Activated B cell treated with CpG ODN at 0.5 μM for 24 hours (primary cell): ENCODE measurements at regions of chr7 and their contacts with region 1.

Region 1: GRCh38 chr7:29921404-29922010 is 68.1 kb downstream of the SCRN1 start:
- DNase-seq: no peak
- ATAC-seq: peak; percentile 97
- H3K4me3 Mint-ChIP-seq: no peak overlapping the region
- H3K27ac Mint-ChIP-seq: no peak overlapping the region
- H3K4me1 Mint-ChIP-seq: no peaks in the 10 kb centered on the region
- H3K27me3 Mint-ChIP-seq: no peaks in the 10 kb centered on the region
- CTCF ChIP-seq: no peak

Region 2: GRCh38 chr7:29976673-29977415 is 55.3 kb after region 1 on chr7:
- CTCF ChIA-PET with region 1: no interaction called
- POLR2A ChIA-PET with region 1: no interaction called
- intact Hi-C with region 1: no loop called
- DNase-seq: no peak
- ATAC-seq: no peak
- H3K4me3 Mint-ChIP-seq: no peak overlapping the region
- H3K27ac Mint-ChIP-seq: no peak overlapping the region
- H3K4me1 Mint-ChIP-seq: peaks cover 17% of the 10 kb centered on the region
- H3K27me3 Mint-ChIP-seq: no peaks in the 10 kb centered on the region
- CTCF ChIP-seq: no peak

Region 3: DNA sequence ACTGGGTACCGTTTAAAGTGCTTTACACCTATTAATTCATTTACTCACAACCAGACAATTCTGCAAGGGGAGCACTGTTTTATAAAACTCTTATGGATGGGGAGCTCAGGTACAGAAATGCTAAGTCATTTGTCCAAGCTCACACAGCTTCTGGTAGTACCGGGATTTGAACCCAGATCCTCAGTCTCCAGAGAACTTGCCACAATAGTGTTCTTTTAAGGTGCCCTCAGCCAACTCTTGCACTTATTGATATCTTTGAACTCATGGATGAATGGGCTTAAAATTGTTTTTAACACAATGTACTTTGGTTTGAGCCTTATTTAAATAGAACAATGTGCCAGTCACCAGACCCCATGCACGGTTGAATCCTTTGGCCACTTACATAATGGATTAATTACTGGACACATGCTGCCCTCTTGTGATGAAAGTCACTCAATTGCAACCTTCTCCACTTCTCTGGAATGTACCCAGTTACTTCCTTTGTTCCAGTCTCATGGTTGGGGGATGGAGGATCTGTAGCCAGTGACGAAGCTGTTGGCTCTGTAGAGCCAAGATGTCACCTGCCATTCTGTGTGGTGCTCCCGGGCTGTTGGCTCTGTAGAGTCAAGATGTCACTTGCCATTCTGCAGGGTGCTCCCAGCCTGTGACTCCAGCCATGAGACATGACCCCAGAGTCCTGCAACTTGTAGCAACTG is 491.4 kb after region 1 on chr7:
- CTCF ChIA-PET with region 1: no interaction called
- POLR2A ChIA-PET with region 1: no interaction called
- intact Hi-C with region 1: loop called (anchors 2 kb)
- DNase-seq: no peak
- ATAC-seq: peak; percentile 57
- H3K4me3 Mint-ChIP-seq: no peak overlapping the region
- H3K27ac Mint-ChIP-seq: no peak overlapping the region
- H3K4me1 Mint-ChIP-seq: peaks cover 33% of the 10 kb centered on the region
- H3K27me3 Mint-ChIP-seq: no peaks in the 10 kb centered on the region
- CTCF ChIP-seq: no peak

Region 4: GRCh38 chr7:30911561-30911969 is 990.1 kb after region 1 on chr7 and contains the start of gene AQP1:
- CTCF ChIA-PET with region 1: no interaction called
- POLR2A ChIA-PET with region 1: no interaction called
- intact Hi-C with region 1: no loop called
- DNase-seq: no peak
- ATAC-seq: no peak
- H3K4me3 Mint-ChIP-seq: no peak within 1 kb of the TSS
- H3K27ac Mint-ChIP-seq: no peak within 1 kb of the TSS
- H3K4me1 Mint-ChIP-seq: no peaks in the 10 kb centered on the region
- H3K27me3 Mint-ChIP-seq: peaks cover 6% of the 10 kb centered on the region
- CTCF ChIP-seq: no peak
- total RNA-seq, gene AQP1: 0.44 TPM in 1 of 2 replicates, not detected in the other